Heart right ventricle (tissue), 16 donors: ENCODE measurements at regions of chr15 and their contacts with region 1.

Region 1: GRCh38 chr15:66046751-66047150 is 177.5 kb downstream of the RAB11A start:
- DNase-seq: no peak
- ATAC-seq: no peak
- H3K4me3 ChIP-seq: no peak overlapping the region
- H3K27ac ChIP-seq: no peak overlapping the region
- H3K4me1 ChIP-seq: no peaks in the 10 kb centered on the region
- H3K27me3 ChIP-seq: peaks cover 0 to 28% (median 6%) of the 10 kb centered on the region in 7 donors
- CTCF ChIP-seq: no peak

Region 2: GRCh38 chr15:66033143-66033542 is 13.6 kb before region 1 on chr15:
- intact Hi-C with region 1: no loop called
- DNase-seq: no peak
- ATAC-seq: no peak
- H3K4me3 ChIP-seq: no peak overlapping the region
- H3K27ac ChIP-seq: no peak overlapping the region
- H3K4me1 ChIP-seq: no peaks in the 10 kb centered on the region
- H3K27me3 ChIP-seq: peaks cover 0 to 38% (median 24%) of the 10 kb centered on the region in 7 donors
- CTCF ChIP-seq: no peak

Region 3: GRCh38 chr15:66126031-66126441 is 79.3 kb after region 1 on chr15:
- intact Hi-C with region 1: no loop called
- DNase-seq: no peak
- ATAC-seq: no peak
- H3K4me3 ChIP-seq: no peak overlapping the region
- H3K27ac ChIP-seq: no peak overlapping the region
- H3K4me1 ChIP-seq: no peaks in the 10 kb centered on the region
- H3K27me3 ChIP-seq: peaks cover 0 to 63% (median 54%) of the 10 kb centered on the region in 7 donors
- CTCF ChIP-seq: no peak

Region 4: GRCh38 chr15:66153549-66154415 is 107.0 kb after region 1 on chr15:
- intact Hi-C with region 1: loop called in 1 of 10 experiments (anchors 10 kb)
- DNase-seq: no peak
- ATAC-seq: no peak
- H3K4me3 ChIP-seq: no peak overlapping the region
- H3K27ac ChIP-seq: no peak overlapping the region
- H3K4me1 ChIP-seq: peaks cover 0 to 4% (median 0%) of the 10 kb centered on the region in 9 donors
- H3K27me3 ChIP-seq: peaks cover 0 to 50% (median 32%) of the 10 kb centered on the region in 7 donors
- CTCF ChIP-seq: no peak

Region 5: DNA sequence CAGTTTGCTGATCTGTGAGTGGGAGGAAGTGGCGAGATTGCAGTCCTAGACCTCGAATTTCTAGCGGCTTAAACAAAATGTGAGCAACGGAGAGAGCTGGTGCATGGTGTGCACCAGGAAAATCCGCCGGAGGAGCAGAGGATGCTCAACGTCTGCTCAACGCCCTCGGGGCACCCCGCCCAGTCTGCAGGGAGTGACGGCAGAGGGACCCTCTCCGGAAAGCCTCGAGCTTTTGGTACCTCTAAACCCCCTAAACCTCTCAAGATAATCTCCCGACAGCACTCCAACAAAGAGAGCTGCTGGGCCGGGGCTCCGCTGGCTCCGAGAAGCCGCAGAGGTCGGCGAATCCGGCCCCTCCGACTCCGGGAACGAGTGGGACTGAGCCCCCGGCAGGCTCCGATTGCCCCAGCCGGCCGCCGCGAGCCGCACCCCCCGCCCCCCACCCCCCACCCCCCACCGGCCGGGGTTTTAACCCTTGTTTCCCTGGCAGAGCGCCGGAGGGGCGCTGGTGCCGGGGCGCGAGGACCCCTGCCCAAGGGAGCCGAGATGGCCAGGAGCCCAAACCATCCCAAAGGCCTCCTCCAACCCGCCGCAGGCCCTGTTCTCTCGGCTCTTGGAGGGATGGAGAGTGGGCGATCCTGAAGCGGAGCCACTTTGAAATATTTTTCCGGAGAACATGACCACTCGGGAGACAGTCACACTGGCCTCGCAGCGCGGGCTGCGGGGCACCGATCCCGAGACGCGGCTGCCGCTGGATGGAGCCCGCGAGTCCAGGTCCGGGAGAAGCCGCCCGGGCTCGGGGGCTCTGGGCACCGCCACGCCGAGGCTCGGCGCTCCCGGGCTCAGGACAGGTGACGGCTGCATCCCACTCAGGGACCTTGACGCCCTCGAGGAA is 205.3 kb after region 1 on chr15:
- intact Hi-C with region 1: no loop called
- DNase-seq: peak; percentile 39 to 53
- ATAC-seq: peak; percentile 71 to 87 (median 84)
- H3K4me3 ChIP-seq: peak overlapping the region; percentile 26 to 64 (median 56)
- H3K27ac ChIP-seq: no peak overlapping the region
- H3K4me1 ChIP-seq: peaks cover 15 to 31% (median 28%) of the 10 kb centered on the region in 9 donors
- H3K27me3 ChIP-seq: peaks cover 0 to 89% (median 83%) of the 10 kb centered on the region in 7 donors
- CTCF ChIP-seq: peak; percentile 44 to 82 (median 66)